IMR-90 (cell line): ENCODE measurements at regions of chr4 and their contacts with region 1.

Region 1: GRCh38 chr4:18869166-18869565 is 847.6 kb upstream of the LCORL start:
- DNase-seq: no peak
- ATAC-seq: no peak
- H3K4me3 ChIP-seq: no peak overlapping the region
- H3K27ac ChIP-seq: no peak overlapping the region
- H3K4me1 ChIP-seq: no peaks in the 10 kb centered on the region
- H3K27me3 ChIP-seq: no peaks in the 10 kb centered on the region
- CTCF ChIP-seq: no peak
- POLR2A ChIP-seq: no peak
- RAD21 ChIP-seq: no peak

Region 2: DNA sequence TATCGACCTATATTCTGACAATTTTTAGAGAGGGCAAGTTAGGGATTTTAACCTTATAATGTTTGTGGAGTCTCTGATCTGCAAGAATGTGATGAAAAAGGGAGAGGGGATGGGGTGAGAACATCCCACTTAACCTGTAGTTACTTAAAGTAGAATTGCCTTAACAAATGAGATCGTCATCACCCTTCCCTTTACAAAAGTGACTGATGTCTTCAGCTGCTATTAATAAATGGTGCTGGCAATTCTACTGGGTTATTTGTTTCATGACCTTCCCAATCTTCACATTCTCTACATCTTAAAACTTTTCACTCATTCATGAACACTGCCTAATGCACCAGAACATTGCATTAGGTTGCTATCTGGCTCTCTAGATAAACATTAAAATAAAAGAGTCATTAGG is 25.8 kb after region 1 on chr4:
- CTCF ChIA-PET with region 1: no interaction called
- POLR2A ChIA-PET with region 1: no interaction called
- dilution Hi-C with region 1: no loop called
- in situ Hi-C with region 1: no loop called
- intact Hi-C with region 1: loop called (anchors 1 kb)
- DNase-seq: no peak
- ATAC-seq: no peak
- H3K4me3 ChIP-seq: no peak overlapping the region
- H3K27ac ChIP-seq: no peak overlapping the region
- H3K4me1 ChIP-seq: no peaks in the 10 kb centered on the region
- H3K27me3 ChIP-seq: no peaks in the 10 kb centered on the region
- CTCF ChIP-seq: no peak
- POLR2A ChIP-seq: no peak
- RAD21 ChIP-seq: no peak